Left ventricle myocardium superior (tissue), 1 donor: ENCODE measurements at regions of chr11 and their contacts with region 1.

Region 1: DNA sequence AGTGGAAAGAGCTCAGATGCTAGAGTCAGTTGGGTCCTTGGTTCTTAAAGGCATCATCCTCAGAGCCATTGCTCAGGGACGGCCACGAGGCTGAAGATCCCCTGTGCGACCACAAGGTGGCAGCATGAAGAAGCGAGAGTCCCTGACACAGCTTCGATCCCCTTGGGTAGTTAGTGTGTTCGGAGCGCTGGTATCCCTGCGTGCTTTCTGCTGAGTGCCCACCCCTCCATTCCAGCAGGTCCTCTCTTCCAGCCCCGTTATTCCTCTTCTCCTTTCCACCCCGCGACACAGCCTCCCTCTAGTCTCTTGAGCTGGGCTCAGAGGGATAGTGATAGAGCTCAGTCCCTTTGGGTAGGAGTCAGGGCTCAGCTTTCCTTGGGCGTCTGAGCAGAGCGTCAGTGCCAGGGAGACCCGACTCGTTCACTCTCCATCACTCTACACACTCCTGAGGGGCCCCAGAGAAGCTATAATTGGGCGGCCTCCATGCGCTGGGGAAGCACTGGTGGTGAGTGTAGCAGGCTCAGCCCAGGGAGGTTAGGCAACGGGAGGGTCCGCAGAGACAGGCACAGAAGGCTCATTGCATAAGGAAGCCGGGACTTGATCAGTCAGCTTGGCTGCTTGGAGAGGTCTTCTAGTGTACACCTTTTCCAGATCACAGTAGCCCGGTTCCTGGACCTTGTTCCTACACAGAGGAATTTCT is at the start of gene OR51D1:
- DNase-seq: peak; percentile 76
- ATAC-seq: peak; percentile 98
- total RNA-seq, gene OR51D1: not detected

Region 2: GRCh38 chr11:4704054-4704789 is 67.1 kb after region 1 on chr11 and contains the start of gene MMP26:
- intact Hi-C with region 1: no loop called
- DNase-seq: no peak
- ATAC-seq: no peak
- total RNA-seq, gene MMP26: not detected

Region 3: DNA sequence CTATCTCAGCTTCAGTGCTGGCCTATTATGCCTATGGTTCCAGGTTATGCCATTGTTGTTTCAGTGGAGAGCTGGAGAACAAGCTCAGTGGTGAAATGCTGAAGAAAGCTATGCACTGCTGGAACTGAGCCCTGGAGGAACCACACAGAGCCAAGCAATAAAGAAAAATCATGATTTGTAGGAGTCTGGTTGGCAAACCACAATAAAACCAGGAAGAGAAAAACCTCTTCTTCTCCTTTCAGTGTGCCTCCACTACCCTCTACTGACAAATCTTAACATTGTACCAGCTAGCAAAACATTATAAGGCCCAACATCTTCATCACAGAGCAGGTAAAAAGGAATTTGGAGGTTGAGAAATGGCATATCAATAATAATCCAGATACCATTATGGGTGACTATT is 189.3 kb after region 1 on chr11:
- intact Hi-C with region 1: loop called (anchors 2 kb)
- DNase-seq: no peak
- ATAC-seq: peak; percentile 42

Region 4: DNA sequence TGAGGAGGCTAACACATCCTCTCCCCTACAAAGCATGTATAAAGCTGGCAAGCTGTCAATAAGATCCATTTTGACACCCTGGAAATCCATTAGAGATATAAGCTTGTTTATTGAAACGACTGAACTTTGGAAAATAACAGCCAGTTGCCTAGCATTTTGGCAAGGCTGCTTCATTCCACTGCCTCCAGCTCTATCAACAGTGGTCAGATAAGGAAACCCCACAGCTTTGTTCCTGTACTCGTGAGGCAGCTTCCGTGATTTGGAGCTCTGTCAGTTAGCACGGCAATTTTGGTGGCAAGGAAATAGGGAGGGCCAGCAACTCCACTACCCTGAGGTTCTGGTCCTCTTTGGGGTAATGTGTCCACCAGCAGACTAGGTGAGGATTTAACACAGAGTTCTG is 213.9 kb after region 1 on chr11:
- intact Hi-C with region 1: no loop called
- DNase-seq: no peak
- ATAC-seq: peak; percentile 94

Region 5: GRCh38 chr11:5004424-5005274 is 367.5 kb after region 1 on chr11:
- intact Hi-C with region 1: loop called (anchors 5 kb)
- DNase-seq: peak; percentile 53
- ATAC-seq: peak; percentile 26